Activated CD4-positive, alpha-beta memory T cell treated with anti-CD3 and anti-CD28 coated beads for 36 hours (primary cell): ENCODE measurements at regions of chr11 and their contacts with region 1.

Region 1: DNA sequence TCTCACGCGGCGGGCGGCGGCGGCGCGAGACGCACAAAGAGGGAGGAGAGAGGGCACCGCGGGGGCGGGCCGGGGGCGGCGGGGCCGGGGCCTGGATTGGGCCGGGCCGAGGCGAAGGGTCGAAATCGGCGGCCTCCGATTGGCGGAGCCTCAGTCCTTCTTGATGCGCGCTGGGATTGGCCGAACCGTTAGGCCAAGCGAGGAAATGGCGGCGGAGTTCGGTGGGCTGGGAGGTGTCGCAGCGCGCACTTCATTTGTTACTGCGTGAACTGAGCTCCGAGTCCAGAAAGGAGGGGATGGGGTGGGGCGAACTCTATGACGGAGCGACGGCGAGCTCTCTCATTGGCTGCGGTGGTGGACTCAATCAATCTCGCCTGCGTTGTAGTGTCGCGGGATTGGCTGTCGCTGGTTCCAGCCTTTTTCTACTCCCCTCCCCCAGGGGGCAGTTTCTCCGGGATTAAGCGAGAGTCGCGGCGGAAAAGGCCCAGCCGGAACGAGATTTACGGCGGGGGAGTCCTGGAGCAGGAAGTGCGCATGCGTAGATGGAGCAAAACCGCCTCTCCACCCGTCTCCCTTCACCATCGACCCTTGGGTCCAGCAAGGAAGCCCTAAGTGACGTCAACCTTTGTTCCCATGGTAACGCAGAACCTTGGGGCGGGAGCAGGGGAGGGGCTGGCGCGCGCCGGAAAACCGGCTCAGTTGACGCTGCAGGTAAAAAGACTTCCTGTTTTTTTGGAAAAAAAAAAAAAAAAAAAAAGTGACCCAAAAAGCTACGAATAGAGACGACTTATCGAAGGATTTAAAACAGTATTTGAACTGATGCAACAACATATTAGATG is at the start of gene SF1:
- DNase-seq: peak; percentile 100
- H3K4me3 Mint-ChIP-seq: peak within 1 kb of the TSS; percentile 91
- H3K27ac Mint-ChIP-seq: peak within 1 kb of the TSS; percentile 99
- H3K4me1 Mint-ChIP-seq: peaks cover 57% of the 10 kb centered on the region
- H3K27me3 Mint-ChIP-seq: no peaks in the 10 kb centered on the region
- total RNA-seq, gene SF1: 323 to 328 TPM

Region 2: DNA sequence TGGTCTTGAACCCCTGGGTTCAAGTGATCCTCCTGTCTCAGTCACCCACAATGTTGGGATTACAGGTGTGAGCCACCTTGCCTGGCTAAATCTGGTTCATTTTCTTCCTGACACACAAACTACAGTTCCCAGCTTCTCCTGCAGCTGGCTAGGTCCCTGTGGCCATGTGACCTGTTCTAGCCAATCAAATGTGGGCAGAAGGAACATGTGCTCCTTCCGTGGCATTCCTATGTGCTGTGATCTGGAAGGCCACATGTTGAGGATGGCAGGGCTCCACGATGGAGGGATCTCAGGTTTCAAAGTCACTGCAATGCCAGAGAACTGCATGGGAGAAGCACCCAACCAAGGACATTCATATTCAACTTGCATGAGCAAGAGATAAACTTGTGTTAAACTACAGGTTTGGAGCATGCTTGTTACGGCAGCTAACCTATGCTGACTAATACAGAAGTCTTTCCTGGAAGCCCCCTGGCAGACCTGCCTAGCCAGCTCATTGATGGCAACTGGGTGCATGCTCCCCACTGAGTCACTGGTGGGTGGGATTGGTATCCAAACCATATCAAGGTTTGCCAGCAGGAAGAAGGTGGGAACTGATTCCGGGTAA is 333.8 kb before region 1 on chr11:
- CTCF ChIA-PET with region 1: no interaction called
- POLR2A ChIA-PET with region 1: no interaction called
- intact Hi-C with region 1: no loop called
- DNase-seq: no peak
- H3K4me3 Mint-ChIP-seq: no peak overlapping the region
- H3K27ac Mint-ChIP-seq: no peak overlapping the region
- H3K4me1 Mint-ChIP-seq: peaks cover 13% of the 10 kb centered on the region
- H3K27me3 Mint-ChIP-seq: peaks cover 20% of the 10 kb centered on the region

Region 3: GRCh38 chr11:64742889-64743590 is 35.7 kb before region 1 on chr11:
- CTCF ChIA-PET with region 1: interaction called, 6 read pairs
- POLR2A ChIA-PET with region 1: interaction called, 3 read pairs
- intact Hi-C with region 1: loop called (anchors 1 kb)
- DNase-seq: peak; percentile 84
- H3K4me3 Mint-ChIP-seq: peak overlapping the region; percentile 37
- H3K27ac Mint-ChIP-seq: no peak overlapping the region
- H3K4me1 Mint-ChIP-seq: peaks cover 25% of the 10 kb centered on the region
- H3K27me3 Mint-ChIP-seq: peaks cover 8% of the 10 kb centered on the region

Region 4: DNA sequence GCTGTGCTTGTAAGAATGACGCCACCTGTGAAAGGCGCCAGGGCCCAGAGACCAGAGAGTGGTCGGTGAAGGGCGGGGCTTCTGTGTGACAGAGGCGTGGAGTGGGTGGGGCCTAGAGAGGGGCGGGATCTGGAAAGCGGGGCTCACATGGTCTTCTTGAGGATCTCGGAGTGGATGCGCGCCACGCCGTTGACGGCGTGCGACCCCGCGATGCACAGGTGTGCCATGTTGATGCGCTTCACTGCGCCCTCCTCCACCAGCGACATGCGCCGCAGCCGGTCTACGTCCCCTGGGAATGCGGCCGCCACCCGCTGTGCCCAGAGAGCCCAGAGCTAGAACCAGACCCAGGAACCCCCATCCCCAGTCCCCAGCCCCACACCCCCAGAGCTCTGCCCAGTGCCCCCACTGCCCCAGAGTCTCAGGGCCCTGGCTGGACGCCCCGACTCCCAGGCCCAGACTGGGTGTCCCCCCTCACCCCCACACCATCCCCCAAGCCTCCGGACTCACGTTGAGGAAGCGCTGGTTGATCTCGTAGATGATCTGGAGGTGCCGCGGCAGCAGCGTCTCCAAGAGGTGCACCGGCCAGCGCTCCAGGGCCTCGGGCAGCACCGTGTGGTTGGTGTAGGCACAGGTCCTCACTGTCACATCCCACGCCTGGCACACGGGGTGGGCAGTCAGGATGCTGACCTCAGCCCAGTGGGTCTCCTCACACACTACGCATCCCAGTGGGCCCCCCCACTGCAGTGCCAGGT is 25.2 kb before region 1 on chr11:
- CTCF ChIA-PET with region 1: no interaction called
- POLR2A ChIA-PET with region 1: no interaction called
- intact Hi-C with region 1: no loop called
- DNase-seq: no peak
- H3K4me3 Mint-ChIP-seq: no peak overlapping the region
- H3K27ac Mint-ChIP-seq: no peak overlapping the region
- H3K4me1 Mint-ChIP-seq: peaks cover 5% of the 10 kb centered on the region
- H3K27me3 Mint-ChIP-seq: no peaks in the 10 kb centered on the region

Region 5: GRCh38 chr11:64767344-64768299 is 11.1 kb before region 1 on chr11:
- CTCF ChIA-PET with region 1: interaction called, 13 read pairs
- POLR2A ChIA-PET with region 1: interaction called, 8 read pairs
- intact Hi-C with region 1: no loop called
- DNase-seq: peak; percentile 83
- H3K4me3 Mint-ChIP-seq: no peak overlapping the region
- H3K27ac Mint-ChIP-seq: peak overlapping the region; percentile 85
- H3K4me1 Mint-ChIP-seq: peaks cover 87% of the 10 kb centered on the region
- H3K27me3 Mint-ChIP-seq: no peaks in the 10 kb centered on the region

Region 6: DNA sequence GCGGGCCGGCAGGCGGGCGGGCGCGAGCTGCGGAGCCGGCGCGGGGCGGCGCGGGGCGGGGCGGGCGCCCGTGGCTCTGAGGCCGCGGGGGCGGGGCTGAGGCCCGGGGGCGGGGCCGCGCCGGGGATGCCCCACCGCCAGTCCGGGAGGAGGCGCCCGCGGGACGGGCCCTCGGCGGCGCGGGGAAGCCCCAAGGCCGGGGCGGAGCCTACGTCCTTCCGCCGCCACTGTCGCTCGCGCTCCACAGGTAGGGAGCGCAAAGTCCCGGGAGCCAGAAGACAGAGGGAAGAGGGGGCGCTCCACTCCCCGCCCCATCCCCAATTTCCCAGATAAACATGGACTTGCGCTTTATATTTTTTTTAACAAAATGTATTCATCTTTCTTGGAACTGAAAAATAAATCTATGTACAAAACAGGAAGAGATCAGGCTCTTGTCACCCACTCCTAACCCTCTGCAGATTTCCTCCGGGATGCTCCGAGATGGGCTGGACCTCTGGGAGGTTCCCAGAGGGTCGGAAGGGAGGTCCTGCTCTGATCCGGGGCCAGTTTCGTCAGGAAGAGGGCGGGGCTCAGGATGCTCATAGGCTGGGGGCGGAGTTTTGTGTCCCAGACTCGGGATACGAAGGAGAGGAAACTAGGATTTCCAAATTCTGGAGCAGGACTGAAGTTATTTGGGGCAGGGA is 24.6 kb after region 1 on chr11 and contains the start of gene MAP4K2:
- CTCF ChIA-PET with region 1: interaction called, 3 read pairs
- POLR2A ChIA-PET with region 1: interaction called, 4 read pairs
- intact Hi-C with region 1: loop called (anchors 2 kb)
- DNase-seq: peak; percentile 89
- H3K4me3 Mint-ChIP-seq: peak within 1 kb of the TSS; percentile 82
- H3K27ac Mint-ChIP-seq: peak within 1 kb of the TSS; percentile 89
- H3K4me1 Mint-ChIP-seq: peaks cover 24% of the 10 kb centered on the region
- H3K27me3 Mint-ChIP-seq: no peaks in the 10 kb centered on the region
- total RNA-seq, gene MAP4K2: 83.3 to 85.8 TPM

Region 7: GRCh38 chr11:64810271-64810890 is 31.7 kb after region 1 on chr11 and contains the start of gene MEN1:
- CTCF ChIA-PET with region 1: no interaction called
- POLR2A ChIA-PET with region 1: interaction called, 8 read pairs
- intact Hi-C with region 1: loop called (anchors 2 kb)
- DNase-seq: peak; percentile 92
- H3K4me3 Mint-ChIP-seq: peak within 1 kb of the TSS; percentile 97
- H3K27ac Mint-ChIP-seq: peak within 1 kb of the TSS; percentile 74
- H3K4me1 Mint-ChIP-seq: peaks cover 20% of the 10 kb centered on the region
- H3K27me3 Mint-ChIP-seq: no peaks in the 10 kb centered on the region
- total RNA-seq, gene MEN1: 31.3 to 32.2 TPM

Region 8: GRCh38 chr11:65040847-65041621 is 262.3 kb after region 1 on chr11 and contains the start of gene SAC3D1:
- CTCF ChIA-PET with region 1: no interaction called
- POLR2A ChIA-PET with region 1: interaction called, 4 read pairs
- intact Hi-C with region 1: loop called (anchors 2 kb)
- DNase-seq: peak; percentile 94
- H3K4me3 Mint-ChIP-seq: peak within 1 kb of the TSS; percentile 87
- H3K27ac Mint-ChIP-seq: peak within 1 kb of the TSS; percentile 97
- H3K4me1 Mint-ChIP-seq: peaks cover 7% of the 10 kb centered on the region
- H3K27me3 Mint-ChIP-seq: no peaks in the 10 kb centered on the region
- total RNA-seq, gene SAC3D1: 14.2 to 14.7 TPM